Activated CD8-positive, alpha-beta T cell treated with anti-CD3 and anti-CD28 coated beads for 36 hours (primary cell): ENCODE measurements at regions of chr15 and their contacts with region 1.

Region 1: DNA sequence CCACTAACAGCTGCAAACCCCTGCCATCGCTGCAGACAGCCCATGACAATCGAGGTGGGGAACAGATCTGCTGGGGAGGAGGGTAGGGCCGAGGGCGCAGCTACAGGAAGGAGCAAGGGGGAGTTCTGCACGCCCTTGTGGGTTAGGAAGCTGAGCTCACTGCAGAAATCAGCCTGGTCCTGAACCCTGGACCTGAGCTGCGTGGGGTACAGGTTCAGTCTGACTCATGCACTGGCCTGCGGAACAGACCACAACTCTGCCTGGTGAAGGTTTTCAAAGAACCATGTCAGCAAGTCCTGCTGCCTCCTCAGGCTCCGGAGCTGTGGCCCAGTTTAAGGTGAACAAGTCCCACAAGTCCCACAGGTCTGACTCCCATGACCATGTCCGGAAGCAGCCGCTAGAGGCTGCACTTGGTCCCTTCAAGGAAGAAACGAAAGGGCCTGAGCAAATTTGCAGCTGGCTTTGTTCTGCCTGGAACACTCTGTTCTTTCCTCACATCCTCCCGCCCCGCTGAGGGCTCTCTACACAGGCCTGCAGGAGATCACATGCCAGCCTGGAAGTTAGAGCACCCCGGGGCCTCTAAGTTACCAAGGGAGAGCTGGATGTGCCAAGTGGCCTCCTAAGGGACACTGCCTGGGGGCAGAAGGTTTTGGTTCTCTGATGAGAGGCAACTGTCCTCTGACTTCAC is 49.4 kb upstream of the AKAP13 start:
- DNase-seq: peak; percentile 90
- ATAC-seq: peak; percentile 87
- H3K4me3 Mint-ChIP-seq: peak overlapping the region; percentile 80
- H3K27ac Mint-ChIP-seq: peak overlapping the region; percentile 92
- H3K4me1 Mint-ChIP-seq: peaks cover 40% of the 10 kb centered on the region
- H3K27me3 Mint-ChIP-seq: no peaks in the 10 kb centered on the region
- CTCF ChIP-seq: peak; percentile 61

Region 2: GRCh38 chr15:85312486-85312885 is 18.6 kb before region 1 on chr15:
- CTCF ChIA-PET with region 1: interaction called, 54 read pairs
- POLR2A ChIA-PET with region 1: interaction called, 6 read pairs
- intact Hi-C with region 1: no loop called
- DNase-seq: peak; percentile 44
- ATAC-seq: peak; percentile 52
- H3K4me3 Mint-ChIP-seq: peak overlapping the region; percentile 25
- H3K27ac Mint-ChIP-seq: peak overlapping the region; percentile 60
- H3K4me1 Mint-ChIP-seq: peaks cover 53% of the 10 kb centered on the region
- H3K27me3 Mint-ChIP-seq: no peaks in the 10 kb centered on the region
- CTCF ChIP-seq: no peak

Region 3: GRCh38 chr15:85318048-85318731 is 12.9 kb before region 1 on chr15:
- CTCF ChIA-PET with region 1: interaction called, 54 read pairs
- POLR2A ChIA-PET with region 1: interaction called, 15 read pairs
- intact Hi-C with region 1: no loop called
- DNase-seq: peak; percentile 75
- ATAC-seq: peak; percentile 88
- H3K4me3 Mint-ChIP-seq: peak overlapping the region; percentile 12
- H3K27ac Mint-ChIP-seq: peak overlapping the region; percentile 85
- H3K4me1 Mint-ChIP-seq: peaks cover 54% of the 10 kb centered on the region
- H3K27me3 Mint-ChIP-seq: no peaks in the 10 kb centered on the region
- CTCF ChIP-seq: no peak

Region 4: GRCh38 chr15:85380217-85380811 is 49.3 kb after region 1 on chr15 and contains the start of gene AKAP13:
- CTCF ChIA-PET with region 1: interaction called, 4 read pairs
- POLR2A ChIA-PET with region 1: interaction called, 3 read pairs
- intact Hi-C with region 1: loop called (anchors 5 kb)
- DNase-seq: peak; percentile 98
- ATAC-seq: peak; percentile 89
- H3K4me3 Mint-ChIP-seq: peak within 1 kb of the TSS; percentile 83
- H3K27ac Mint-ChIP-seq: peak within 1 kb of the TSS; percentile 90
- H3K4me1 Mint-ChIP-seq: peaks cover 42% of the 10 kb centered on the region
- H3K27me3 Mint-ChIP-seq: no peaks in the 10 kb centered on the region
- CTCF ChIP-seq: no peak
- total RNA-seq, gene AKAP13: 79.1 to 79.5 TPM

Region 5: DNA sequence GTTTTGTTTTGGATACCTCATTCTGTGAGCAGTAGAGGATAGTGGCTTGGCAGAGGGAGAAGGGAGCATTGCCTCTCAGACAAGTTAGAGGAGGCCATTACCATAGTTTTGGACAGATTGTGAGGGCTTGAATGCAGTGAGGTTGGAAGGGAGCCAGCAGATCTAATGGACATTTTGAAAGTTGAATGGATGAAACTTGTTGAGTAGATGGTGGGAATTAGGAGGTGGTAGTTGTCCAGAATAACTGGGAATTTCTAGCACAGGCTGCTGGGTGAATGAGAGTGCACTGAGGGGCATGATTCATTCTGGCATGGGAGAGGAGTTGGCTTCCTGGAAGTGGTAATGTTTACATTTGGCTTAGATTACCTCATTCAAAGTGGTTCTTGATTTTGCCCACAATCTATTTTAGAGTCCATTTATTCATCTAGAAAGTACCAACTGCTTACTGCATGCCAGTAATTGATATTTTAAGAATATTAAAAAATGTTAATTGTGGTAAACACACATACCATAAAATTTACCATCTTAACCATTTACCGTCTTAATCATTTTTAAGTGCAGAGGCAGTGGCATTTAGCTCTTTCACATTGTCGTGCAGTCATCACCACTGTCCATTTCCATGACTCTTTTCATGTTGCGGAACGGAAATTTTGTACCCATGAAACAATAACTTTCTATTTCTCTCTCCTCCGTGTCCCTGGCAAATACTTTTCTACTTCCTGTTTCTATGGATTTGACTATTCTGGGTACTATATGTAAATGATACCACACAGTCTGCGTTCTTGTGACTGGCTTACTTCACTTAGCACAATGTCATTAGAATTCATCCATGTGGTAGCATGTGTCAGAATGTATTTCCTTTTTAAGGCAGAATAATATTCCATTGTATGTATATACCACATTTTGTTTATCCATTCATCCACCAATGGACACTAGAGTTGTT is 77.0 kb after region 1 on chr15:
- CTCF ChIA-PET with region 1: interaction called, 51 read pairs
- POLR2A ChIA-PET with region 1: no interaction called
- intact Hi-C with region 1: loop called (anchors 2 kb)
- DNase-seq: peak; percentile 55
- ATAC-seq: peak; percentile 71
- H3K4me3 Mint-ChIP-seq: peak overlapping the region; percentile 12
- H3K27ac Mint-ChIP-seq: peak overlapping the region; percentile 84
- H3K4me1 Mint-ChIP-seq: peaks cover 79% of the 10 kb centered on the region
- H3K27me3 Mint-ChIP-seq: no peaks in the 10 kb centered on the region
- CTCF ChIP-seq: no peak

Region 6: DNA sequence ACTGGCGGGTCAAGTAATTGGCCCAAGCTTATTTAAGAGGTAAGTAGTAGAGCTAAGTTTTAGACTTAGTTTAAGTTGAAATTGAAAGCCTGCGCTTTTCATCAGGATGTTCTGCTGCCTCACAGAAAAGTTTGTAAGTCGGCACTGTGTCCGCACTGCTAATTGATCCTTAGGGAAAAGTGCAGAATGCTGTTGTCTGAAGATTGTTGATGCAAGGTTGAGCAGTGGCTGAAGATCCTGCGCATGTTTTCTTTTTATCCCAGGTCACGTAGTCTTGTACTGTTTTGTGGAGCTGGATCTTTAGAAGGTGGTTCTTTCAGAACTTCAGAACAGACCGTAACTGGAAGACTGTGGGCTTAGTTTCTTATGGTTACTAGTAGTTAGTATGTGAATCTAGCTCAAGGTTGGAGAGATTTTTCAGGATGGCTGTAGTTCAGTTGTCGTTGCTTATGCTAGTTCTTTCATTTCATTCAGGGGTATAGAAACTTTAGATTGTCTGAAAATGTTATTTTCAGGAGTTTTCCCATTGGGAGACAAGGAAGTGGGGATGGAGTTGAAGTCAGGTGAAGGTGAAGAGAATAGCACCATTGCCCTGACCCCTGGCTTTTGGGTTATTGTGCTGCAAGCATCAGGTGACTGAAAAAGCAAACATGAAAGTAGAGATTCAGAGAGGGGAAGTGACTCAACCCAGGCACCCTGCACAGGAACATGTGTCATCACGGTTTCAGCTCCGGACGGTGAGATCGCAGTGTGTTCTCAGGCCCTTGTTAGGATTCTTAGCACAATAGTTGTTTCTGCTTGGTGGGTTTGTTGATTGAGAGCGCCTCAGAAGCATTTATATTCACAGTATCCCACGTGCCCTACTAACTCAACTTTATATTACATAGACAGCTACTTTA is 82.2 kb after region 1 on chr15:
- CTCF ChIA-PET with region 1: interaction called, 51 read pairs
- POLR2A ChIA-PET with region 1: no interaction called
- intact Hi-C with region 1: loop called (anchors 2 kb)
- DNase-seq: peak; percentile 91
- ATAC-seq: peak; percentile 98
- H3K4me3 Mint-ChIP-seq: peak overlapping the region; percentile 40
- H3K27ac Mint-ChIP-seq: peak overlapping the region; percentile 79
- H3K4me1 Mint-ChIP-seq: peaks cover 69% of the 10 kb centered on the region
- H3K27me3 Mint-ChIP-seq: no peaks in the 10 kb centered on the region
- CTCF ChIP-seq: no peak

Region 7: GRCh38 chr15:85534031-85534430 is 203.0 kb after region 1 on chr15:
- CTCF ChIA-PET with region 1: no interaction called
- POLR2A ChIA-PET with region 1: no interaction called
- intact Hi-C with region 1: no loop called
- DNase-seq: peak; percentile 22
- ATAC-seq: peak; percentile 92
- H3K4me3 Mint-ChIP-seq: peak overlapping the region; percentile 53
- H3K27ac Mint-ChIP-seq: peak overlapping the region; percentile 92
- H3K4me1 Mint-ChIP-seq: peaks cover 44% of the 10 kb centered on the region
- H3K27me3 Mint-ChIP-seq: no peaks in the 10 kb centered on the region
- CTCF ChIP-seq: no peak